H1 (cell line): ENCODE measurements at regions of chr6 and their contacts with region 1.

Region 1: GRCh38 chr6:24991810-24992467 is 56.2 kb upstream of the RIPOR2 start:
- DNase-seq: no peak
- H3K4me3 ChIP-seq: no peak overlapping the region
- H3K27ac ChIP-seq: no peak overlapping the region
- H3K4me1 ChIP-seq: peaks cover 0 to 7% (median 6%) of the 10 kb centered on the region in 4 experiments; a peak in 5 of 7 replicates
- H3K27me3 ChIP-seq: no peaks in the 10 kb centered on the region
- CTCF ChIP-seq: peak; percentile 38 to 84 (median 77)
- EP300 ChIP-seq: no peak
- POLR2A ChIP-seq: no peak
- RAD21 ChIP-seq: peak; percentile 76 to 89

Region 2: DNA sequence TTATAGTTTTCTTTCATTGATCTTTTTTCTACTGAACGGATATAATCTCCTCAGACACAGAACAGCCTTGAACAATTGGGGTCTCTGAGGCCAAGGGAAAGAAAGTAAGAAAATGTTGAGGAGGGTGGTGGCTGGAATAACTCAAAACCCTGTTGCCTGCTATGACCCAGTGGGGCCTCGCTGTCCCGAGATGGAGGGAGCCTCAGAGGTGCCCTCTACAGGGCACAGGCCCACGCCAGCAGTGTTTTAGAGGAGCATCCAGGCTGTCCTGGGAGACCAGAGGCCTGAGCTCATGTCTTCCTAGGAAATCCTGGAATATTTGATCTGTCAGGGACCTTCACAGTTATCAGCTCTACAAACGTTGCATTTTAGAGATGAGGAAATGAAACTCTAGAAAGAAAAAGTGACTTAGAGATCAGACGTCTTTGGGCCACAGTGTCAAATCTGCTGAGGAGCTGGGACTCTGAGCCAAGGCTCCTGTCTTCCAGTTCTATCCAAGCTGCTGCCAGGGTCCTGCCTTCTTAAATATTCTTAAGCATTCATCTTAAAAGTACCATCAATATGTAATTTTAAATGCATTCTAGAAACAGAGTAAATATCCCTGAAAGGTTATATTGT is 470.9 kb before region 1 on chr6:
- CTCF ChIA-PET with region 1: interaction called, 12 read pairs
- POLR2A ChIA-PET with region 1: no interaction called
- DNase-seq: peak; percentile 25 to 70
- H3K4me3 ChIP-seq: no peak overlapping the region
- H3K27ac ChIP-seq: no peak overlapping the region
- H3K4me1 ChIP-seq: no peaks in the 10 kb centered on the region
- H3K27me3 ChIP-seq: no peaks in the 10 kb centered on the region
- CTCF ChIP-seq: peak; percentile 88 to 93 (median 89)
- EP300 ChIP-seq: no peak
- POLR2A ChIP-seq: no peak
- RAD21 ChIP-seq: peak; percentile 55 to 74

Region 3: DNA sequence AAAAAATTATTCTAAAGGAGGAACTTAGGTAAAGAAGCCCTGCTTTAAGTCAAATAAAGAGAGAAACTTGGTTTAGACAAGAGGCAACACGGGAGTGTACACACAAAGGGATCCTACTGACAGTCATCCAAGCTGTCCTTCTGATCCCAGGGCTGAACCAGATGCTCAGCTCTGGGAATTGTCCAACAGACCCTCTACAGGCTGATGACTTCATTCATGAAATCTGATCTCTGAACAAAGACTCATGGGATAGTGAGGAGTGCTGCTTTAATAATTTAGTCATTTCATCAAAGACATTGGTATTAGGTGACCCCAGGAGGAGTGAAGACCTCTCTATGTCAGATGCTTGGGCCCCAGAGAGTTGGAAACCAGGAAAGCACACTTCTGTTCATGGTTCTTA is 127.6 kb before region 1 on chr6:
- CTCF ChIA-PET with region 1: interaction called, 25 read pairs
- POLR2A ChIA-PET with region 1: interaction called, 3 read pairs
- DNase-seq: no peak
- H3K4me3 ChIP-seq: no peak overlapping the region
- H3K27ac ChIP-seq: no peak overlapping the region
- H3K4me1 ChIP-seq: no peaks in the 10 kb centered on the region
- H3K27me3 ChIP-seq: no peaks in the 10 kb centered on the region
- CTCF ChIP-seq: no peak
- EP300 ChIP-seq: no peak
- POLR2A ChIP-seq: no peak
- RAD21 ChIP-seq: no peak

Region 4: GRCh38 chr6:24888715-24889370 is 103.1 kb before region 1 on chr6:
- CTCF ChIA-PET with region 1: interaction called, 12 read pairs
- POLR2A ChIA-PET with region 1: no interaction called
- DNase-seq: no peak
- H3K4me3 ChIP-seq: no peak overlapping the region
- H3K27ac ChIP-seq: no peak overlapping the region
- H3K4me1 ChIP-seq: peaks cover 0 to 3% (median 1%) of the 10 kb centered on the region in 4 experiments; a peak in 2 of 7 replicates
- H3K27me3 ChIP-seq: no peaks in the 10 kb centered on the region
- CTCF ChIP-seq: peak in 1 of 3 experiments; percentile 1; a peak in 1 of 4 replicates
- EP300 ChIP-seq: no peak
- POLR2A ChIP-seq: no peak
- RAD21 ChIP-seq: peak in 1 of 2 experiments; percentile 19; a peak in 2 of 4 replicates

Region 5: GRCh38 chr6:24919004-24919892 is 72.7 kb before region 1 on chr6:
- CTCF ChIA-PET with region 1: interaction called, 31 read pairs
- POLR2A ChIA-PET with region 1: no interaction called
- DNase-seq: no peak
- H3K4me3 ChIP-seq: no peak overlapping the region; a peak in 1 of 8 replicates
- H3K27ac ChIP-seq: no peak overlapping the region
- H3K4me1 ChIP-seq: peaks cover 9 to 29% (median 21%) of the 10 kb centered on the region in 4 experiments
- H3K27me3 ChIP-seq: no peaks in the 10 kb centered on the region
- CTCF ChIP-seq: no peak
- EP300 ChIP-seq: no peak
- POLR2A ChIP-seq: no peak
- RAD21 ChIP-seq: no peak

Region 6: DNA sequence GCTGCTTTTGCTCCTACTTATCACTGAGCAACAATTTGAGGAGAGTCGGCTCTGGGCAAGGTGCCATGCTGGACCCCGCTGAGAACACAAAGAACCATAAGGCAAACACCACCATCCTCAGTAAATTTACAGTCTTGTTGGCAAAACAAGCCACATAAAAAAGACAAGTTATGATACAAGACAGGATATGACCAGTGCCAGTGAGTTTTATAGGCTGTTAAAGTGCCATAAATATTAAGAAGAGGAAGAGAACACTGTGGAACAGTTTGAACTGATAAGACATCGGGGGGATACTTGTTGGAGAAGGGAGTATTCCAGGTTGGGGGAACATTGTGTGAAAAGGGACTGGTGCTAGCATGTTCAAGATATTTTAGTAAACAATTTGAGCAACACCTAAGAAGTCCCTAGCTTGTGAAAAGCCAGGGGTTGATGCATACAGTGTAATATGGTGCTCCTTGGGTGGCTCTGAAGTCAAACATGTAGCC is 30.9 kb before region 1 on chr6:
- CTCF ChIA-PET with region 1: interaction called, 13 read pairs
- POLR2A ChIA-PET with region 1: no interaction called
- DNase-seq: no peak
- H3K4me3 ChIP-seq: no peak overlapping the region
- H3K27ac ChIP-seq: no peak overlapping the region
- H3K4me1 ChIP-seq: no peaks in the 10 kb centered on the region
- H3K27me3 ChIP-seq: no peaks in the 10 kb centered on the region
- CTCF ChIP-seq: no peak
- EP300 ChIP-seq: no peak
- POLR2A ChIP-seq: no peak
- RAD21 ChIP-seq: no peak

Region 7: GRCh38 chr6:25006565-25007001 is 14.6 kb after region 1 on chr6:
- CTCF ChIA-PET with region 1: interaction called, 49 read pairs
- POLR2A ChIA-PET with region 1: no interaction called
- DNase-seq: no peak
- H3K4me3 ChIP-seq: no peak overlapping the region
- H3K27ac ChIP-seq: no peak overlapping the region
- H3K4me1 ChIP-seq: peaks cover 0 to 4% (median 2%) of the 10 kb centered on the region in 4 experiments; a peak in 2 of 7 replicates
- H3K27me3 ChIP-seq: no peaks in the 10 kb centered on the region
- CTCF ChIP-seq: no peak
- EP300 ChIP-seq: no peak
- POLR2A ChIP-seq: no peak
- RAD21 ChIP-seq: no peak